ENCODE measurements at regions of chr3 and their contacts with region 1.

Region 1: DNA sequence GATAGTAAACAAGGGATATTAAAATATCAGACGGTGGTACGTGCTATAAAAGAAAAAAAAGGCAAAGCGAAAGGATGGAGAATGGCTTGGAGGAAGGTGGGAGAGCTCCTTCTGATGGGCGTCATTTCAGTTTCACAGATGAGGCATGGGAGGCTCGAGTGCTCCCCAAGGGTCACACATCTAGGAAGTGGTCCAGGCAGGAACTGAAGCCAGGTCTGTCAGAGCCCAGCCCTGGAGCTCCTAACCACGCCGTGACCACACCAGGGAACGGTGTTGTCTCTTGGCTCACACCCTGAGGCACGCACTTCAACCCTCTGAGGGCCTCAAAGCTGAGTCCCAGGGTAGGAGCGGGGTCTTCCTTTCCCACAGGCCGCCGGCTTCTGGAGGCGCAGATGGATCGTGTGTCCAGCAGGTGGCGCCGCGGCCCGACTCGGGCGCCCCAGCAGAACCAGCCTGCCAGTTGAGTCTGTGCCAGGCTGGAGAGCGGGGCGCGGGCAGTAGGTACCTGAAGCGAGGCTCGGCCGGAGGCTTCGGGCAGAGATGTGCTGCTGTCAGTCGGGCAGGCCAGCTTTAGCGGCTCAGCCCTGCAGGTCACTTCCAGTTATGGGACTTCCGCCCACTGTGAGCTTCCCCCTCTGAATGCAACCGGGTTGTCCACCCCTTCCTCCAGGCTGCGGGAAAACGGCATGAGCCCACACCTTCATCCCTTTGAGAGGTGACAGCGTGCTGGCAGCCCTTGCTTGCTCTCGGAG is 68.1 kb downstream of the SLC6A1 start:
- DNase-seq: peak; percentile 77
- ATAC-seq: peak; percentile 76
- H3K4me3 Mint-ChIP-seq: no peak overlapping the region
- H3K27ac Mint-ChIP-seq: no peak overlapping the region
- H3K4me1 Mint-ChIP-seq: no peaks in the 10 kb centered on the region
- H3K27me3 Mint-ChIP-seq: peaks cover 31% of the 10 kb centered on the region

Region 2: DNA sequence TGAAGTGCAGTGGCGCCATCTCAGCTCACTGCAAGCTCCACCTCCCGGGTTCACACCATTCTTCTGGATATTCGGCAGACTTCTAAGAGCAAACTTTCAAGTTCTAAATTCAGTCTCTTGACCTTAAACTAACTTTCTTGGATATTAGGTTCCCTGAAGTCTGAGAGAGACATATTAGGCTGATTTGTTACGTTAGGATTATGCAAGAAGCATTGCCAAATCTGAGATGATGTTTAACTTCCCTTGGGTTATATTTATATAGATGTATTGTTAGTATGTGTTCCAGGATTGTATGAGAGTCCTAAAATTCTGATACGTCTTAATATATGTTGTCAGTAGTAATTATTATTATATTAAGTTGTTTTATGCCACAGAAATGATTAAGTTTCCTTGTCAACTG is 12.0 kb after region 1 on chr3:
- CTCF ChIA-PET with region 1: interaction called, 13 read pairs
- POLR2A ChIA-PET with region 1: interaction called, 3 read pairs
- intact Hi-C with region 1: no loop called
- DNase-seq: no peak
- ATAC-seq: no peak
- H3K4me3 Mint-ChIP-seq: no peak overlapping the region
- H3K27ac Mint-ChIP-seq: no peak overlapping the region
- H3K4me1 Mint-ChIP-seq: no peaks in the 10 kb centered on the region
- H3K27me3 Mint-ChIP-seq: peaks cover 25% of the 10 kb centered on the region

Region 3: GRCh38 chr3:11155341-11156025 is 94.8 kb after region 1 on chr3:
- CTCF ChIA-PET with region 1: no interaction called
- POLR2A ChIA-PET with region 1: no interaction called
- intact Hi-C with region 1: loop called in 1 of 2 experiments (anchors 5 kb)
- DNase-seq: peak; percentile 56
- ATAC-seq: peak; percentile 74
- H3K4me3 Mint-ChIP-seq: no peak overlapping the region
- H3K27ac Mint-ChIP-seq: no peak overlapping the region
- H3K4me1 Mint-ChIP-seq: peaks cover 12% of the 10 kb centered on the region
- H3K27me3 Mint-ChIP-seq: peaks cover 61% of the 10 kb centered on the region

Region 4: DNA sequence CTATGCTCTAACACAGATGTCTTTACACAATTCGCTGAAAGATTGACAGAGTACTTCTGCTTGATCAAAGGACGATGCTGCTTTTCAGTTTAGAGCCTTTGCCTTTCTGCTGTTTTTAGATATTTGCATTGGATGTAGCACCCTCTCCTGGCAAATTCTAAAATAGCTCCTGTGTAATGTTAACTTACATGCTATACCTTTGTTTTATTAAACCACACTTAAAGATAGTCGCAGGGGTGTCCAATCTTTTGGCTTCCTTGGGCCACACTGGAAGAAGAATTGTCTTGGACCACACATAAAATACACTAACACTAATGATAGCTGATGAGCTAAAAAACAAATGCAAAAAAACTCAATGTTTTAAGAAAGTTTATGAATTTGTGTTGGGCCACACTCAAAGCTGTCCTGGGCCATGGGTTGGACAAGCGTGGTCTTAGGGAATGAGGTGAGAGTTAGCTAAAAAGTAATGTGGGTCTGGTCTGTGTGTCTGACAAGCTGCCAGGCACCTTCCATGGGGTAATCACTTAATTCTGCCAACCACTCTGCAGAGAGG is 274.5 kb after region 1 on chr3:
- CTCF ChIA-PET with region 1: interaction called, 20 read pairs
- POLR2A ChIA-PET with region 1: no interaction called
- intact Hi-C with region 1: loop called (anchors 1 kb)
- DNase-seq: no peak
- ATAC-seq: peak; percentile 81
- H3K4me3 Mint-ChIP-seq: no peak overlapping the region
- H3K27ac Mint-ChIP-seq: no peak overlapping the region
- H3K4me1 Mint-ChIP-seq: peaks cover 7% of the 10 kb centered on the region
- H3K27me3 Mint-ChIP-seq: no peaks in the 10 kb centered on the region